Aorta (tissue), 5 donors: ENCODE measurements at regions of chr15 and their contacts with region 1.

Region 1: DNA sequence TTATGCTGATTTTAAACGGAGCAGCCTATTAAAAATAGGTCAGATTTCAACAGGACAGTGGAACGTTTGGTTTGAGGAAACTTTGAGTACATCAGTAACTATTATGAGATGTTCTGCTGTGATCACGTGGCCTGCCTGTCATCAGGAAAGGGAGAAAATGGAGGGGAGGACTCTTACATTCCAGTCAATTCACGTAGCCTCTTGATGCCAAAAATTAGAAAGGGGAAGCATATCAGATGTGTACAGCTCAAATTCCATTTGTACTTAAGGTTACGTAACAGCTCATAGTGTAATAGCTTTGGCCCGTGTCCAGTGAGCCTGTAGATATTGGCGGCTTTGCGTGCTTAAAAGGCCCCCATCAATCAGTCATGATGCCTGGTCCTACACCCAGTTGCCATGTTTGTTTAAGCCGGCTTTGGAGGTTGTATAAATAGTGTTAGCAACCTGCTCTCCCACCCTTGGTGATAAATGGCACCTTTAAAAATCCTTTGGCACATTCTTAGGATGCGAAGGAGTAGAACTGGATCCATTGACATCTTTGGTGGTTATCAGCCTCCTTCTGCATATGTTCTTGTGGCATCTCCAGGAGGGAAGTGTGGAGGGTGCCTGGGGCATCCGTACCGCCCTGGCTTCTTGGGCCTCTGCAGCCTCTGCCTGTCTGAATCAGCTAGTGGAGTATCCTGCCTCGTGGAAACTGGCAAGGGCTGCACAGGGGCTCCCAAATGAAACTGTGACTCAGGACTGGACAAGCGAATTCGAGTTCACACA is 163.9 kb downstream of the THSD4 start:
- DNase-seq: peak; percentile 77 to 85
- ATAC-seq: peak; percentile 83
- H3K4me3 ChIP-seq: no peak overlapping the region
- H3K27ac ChIP-seq: peak overlapping the region; percentile 72 to 89
- H3K4me1 ChIP-seq: peaks cover 5 to 14% of the 10 kb centered on the region in 2 donors
- H3K27me3 ChIP-seq: no peaks in the 10 kb centered on the region

Region 2: GRCh38 chr15:71219645-71220044 is 59.5 kb before region 1 on chr15:
- intact Hi-C with region 1: loop called in 1 of 2 experiments (anchors 5 kb)
- DNase-seq: no peak
- ATAC-seq: peak; percentile 34
- H3K4me3 ChIP-seq: no peak overlapping the region
- H3K27ac ChIP-seq: peak overlapping the region in 1 of 2 donors; percentile 81
- H3K4me1 ChIP-seq: peaks cover 5% of the 10 kb centered on the region in 2 donors
- H3K27me3 ChIP-seq: no peaks in the 10 kb centered on the region